Activated T-helper 2 cell treated with anti-CD3 and anti-CD28 coated beads, Interferon-gamma antibody, Interleukin-2, Interleukin-4, amounts not matched to agents 10 μg/mL and 5 μg/mL and 100 μg/mL, durations not matched to agents 14 hours and 24 hours and 36 hours (primary cell): ENCODE measurements at regions of chr16 and their contacts with region 1.

Region 1: DNA sequence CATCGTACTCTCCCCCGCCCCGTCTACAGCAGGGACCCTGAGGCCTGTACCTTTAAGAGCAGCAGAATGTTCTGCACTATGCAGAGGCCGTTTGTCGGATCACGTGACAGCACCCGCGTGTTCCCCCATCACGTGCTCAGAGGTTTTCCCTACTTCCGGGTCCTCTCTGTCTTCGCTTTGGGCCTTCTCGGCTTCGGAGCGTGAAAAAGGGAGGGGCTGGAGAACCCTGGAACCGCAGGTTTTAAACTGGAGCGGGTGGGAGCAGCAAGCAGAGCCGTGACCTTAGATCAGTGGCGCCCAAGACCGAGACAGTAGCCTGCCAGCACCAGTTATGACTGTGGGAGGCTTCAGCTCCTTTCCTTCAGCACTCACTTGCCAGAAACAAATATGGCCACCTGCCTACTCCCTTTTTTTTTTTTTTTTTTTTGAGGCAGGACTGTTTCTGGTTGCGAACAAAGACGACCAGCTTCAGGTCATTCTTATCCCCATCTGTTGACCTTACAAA is at the start of gene CLN3:
- DNase-seq: peak; percentile 88
- H3K4me3 Mint-ChIP-seq: peak within 1 kb of the TSS; percentile 92
- H3K27ac Mint-ChIP-seq: peak within 1 kb of the TSS; percentile 99
- H3K4me1 Mint-ChIP-seq: peaks cover 41% of the 10 kb centered on the region
- H3K27me3 Mint-ChIP-seq: no peaks in the 10 kb centered on the region
- total RNA-seq, gene CLN3: 26.5 and 30.1 TPM in 2 replicates

Region 2: DNA sequence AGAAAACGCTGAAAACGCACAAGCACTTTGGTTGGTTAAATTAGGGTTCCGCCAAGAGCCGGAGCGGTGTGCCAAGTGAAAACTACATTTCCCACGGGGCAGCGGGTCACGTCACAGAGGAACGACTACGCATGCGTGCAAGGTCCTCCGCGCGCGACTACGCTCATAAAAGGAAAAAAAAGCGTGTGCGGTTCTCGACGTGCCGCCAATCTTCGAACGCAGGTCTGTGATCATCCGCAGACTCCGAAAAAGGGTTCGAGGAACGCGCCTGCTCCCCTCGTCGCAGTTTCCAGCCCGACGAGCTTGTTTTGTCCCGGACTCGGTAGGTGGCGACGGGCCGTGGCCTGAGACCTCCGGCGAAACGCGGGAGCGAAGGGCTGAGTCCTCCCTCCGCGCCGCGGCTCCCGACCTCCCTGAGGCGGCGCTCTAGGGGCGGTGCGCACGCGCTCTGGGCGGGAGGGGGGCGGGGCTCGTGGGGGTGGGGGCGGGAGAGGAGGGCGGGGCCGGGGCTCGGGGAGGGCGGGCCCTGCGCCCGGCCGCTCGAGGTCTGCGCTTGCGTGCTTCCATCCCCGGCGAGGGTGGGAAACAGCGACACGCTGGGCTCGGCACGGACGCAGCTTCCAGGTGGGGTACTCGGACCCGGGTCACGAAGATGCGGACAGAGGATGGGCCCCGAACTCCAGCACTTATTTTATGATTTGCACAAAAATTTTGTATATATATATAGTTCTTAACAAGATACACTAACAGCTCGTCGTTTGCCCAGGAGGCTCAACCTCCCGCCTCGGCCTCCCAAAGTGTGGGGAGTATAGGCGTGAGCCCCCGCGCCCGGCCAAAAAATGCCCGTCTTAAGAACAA is 62.0 kb after region 1 on chr16 and contains the start of gene SGF29:
- intact Hi-C with region 1: loop called (anchors 1 kb)
- DNase-seq: peak; percentile 90
- H3K4me3 Mint-ChIP-seq: peak within 1 kb of the TSS; percentile 87
- H3K27ac Mint-ChIP-seq: peak within 1 kb of the TSS; percentile 97
- H3K4me1 Mint-ChIP-seq: peaks cover 19% of the 10 kb centered on the region
- H3K27me3 Mint-ChIP-seq: no peaks in the 10 kb centered on the region
- total RNA-seq, gene SGF29: 33.0 and 38.0 TPM in 2 replicates

Region 3: DNA sequence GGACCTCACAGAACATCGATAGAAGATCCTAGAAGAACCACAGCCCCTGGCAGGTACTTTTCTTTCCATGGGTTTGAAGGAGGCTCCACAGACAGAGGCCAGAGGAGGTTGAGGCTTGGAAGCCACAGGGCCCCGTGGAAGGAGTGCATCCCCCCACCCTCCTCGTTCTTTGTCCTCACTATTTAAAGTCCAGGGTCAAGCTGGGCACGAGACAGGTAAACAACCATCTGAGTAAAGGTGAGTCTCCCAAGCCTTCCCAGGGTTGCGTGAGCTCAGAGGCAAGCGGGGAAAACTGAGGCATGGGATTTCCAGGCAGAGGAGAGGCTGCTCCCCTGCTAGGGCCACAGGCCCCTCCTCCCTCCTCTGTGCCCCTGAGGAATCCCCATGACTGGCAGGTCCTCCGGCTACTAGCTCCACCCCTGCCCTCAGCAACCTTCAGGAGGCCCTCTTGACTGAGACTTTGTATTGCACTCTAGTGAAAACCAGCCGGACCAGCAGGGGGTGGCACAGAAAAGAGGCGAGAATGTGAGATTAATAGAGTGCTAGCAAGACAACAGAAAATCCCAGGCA is 105.8 kb after region 1 on chr16:
- intact Hi-C with region 1: no loop called
- DNase-seq: no peak
- H3K4me3 Mint-ChIP-seq: no peak overlapping the region
- H3K27ac Mint-ChIP-seq: no peak overlapping the region
- H3K4me1 Mint-ChIP-seq: no peaks in the 10 kb centered on the region
- H3K27me3 Mint-ChIP-seq: no peaks in the 10 kb centered on the region